ENCODE measurements at regions of chrX and their contacts with region 1.

Region 1: DNA sequence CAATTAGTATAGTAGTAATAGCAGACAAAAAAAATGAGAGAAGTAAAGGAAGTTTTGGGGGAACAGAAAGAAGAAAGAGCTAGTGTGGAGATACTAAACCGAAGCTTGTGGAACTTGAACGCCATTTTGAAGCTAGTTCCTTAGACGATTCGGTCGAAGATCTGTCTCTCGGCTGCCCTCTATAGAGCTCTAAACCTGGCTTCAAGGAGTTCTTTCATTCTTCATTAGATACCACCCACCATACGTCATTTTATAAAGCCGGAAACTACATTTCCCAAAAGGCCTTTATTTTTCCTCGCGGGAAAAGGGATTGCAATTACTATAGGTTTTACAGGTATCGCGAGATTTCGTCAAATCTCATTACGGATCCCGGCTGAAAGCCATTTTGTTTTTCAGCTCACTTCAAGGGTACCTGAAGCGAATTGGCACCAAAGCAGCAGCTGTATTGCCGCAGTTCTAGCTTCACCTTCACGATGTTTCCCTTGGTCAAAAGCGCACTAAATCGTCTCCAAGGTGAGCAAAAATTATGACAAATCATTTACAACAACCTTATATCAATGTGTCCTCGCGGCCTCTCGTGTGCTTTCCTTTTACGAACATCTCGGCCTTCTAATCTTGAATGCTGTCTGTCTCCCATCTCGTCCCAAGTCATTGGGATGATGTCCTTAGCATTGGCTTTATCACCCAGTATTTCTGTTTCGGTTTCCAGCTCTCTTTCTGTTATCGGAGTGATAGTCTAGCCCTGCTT is at the start of gene COX7B:
- DNase-seq: peak; percentile 94
- H3K4me3 ChIP-seq: peak within 1 kb of the TSS; percentile 48 to 88 (median 62)
- H3K27ac ChIP-seq: peak within 1 kb of the TSS; percentile 75
- H3K4me1 ChIP-seq: peaks cover 6% of the 10 kb centered on the region
- H3K27me3 ChIP-seq: no peaks in the 10 kb centered on the region
- CTCF ChIP-seq: peak; percentile 34 to 46
- POLR2A ChIP-seq: peak; percentile 75
- total RNA-seq, gene COX7B: 229 and 230 TPM in 2 replicates

Region 2: GRCh38 chrX:76555814-76556213 is 1343.4 kb before region 1 on chrX:
- CTCF ChIA-PET with region 1: interaction called, 5 read pairs
- POLR2A ChIA-PET with region 1: no interaction called
- dilution Hi-C with region 1: no loop called
- intact Hi-C with region 1: loop called (anchors 10 kb)
- DNase-seq: peak; percentile 19
- H3K4me3 ChIP-seq: no peak overlapping the region
- H3K27ac ChIP-seq: no peak overlapping the region
- H3K4me1 ChIP-seq: no peaks in the 10 kb centered on the region
- H3K27me3 ChIP-seq: no peaks in the 10 kb centered on the region
- CTCF ChIP-seq: peak; percentile 8 to 25
- POLR2A ChIP-seq: no peak

Region 3: GRCh38 chrX:77652095-77652494 is 247.2 kb before region 1 on chrX:
- CTCF ChIA-PET with region 1: no interaction called
- POLR2A ChIA-PET with region 1: no interaction called
- dilution Hi-C with region 1: no loop called
- intact Hi-C with region 1: no loop called
- DNase-seq: no peak
- H3K4me3 ChIP-seq: no peak overlapping the region
- H3K27ac ChIP-seq: no peak overlapping the region
- H3K4me1 ChIP-seq: peaks cover 7% of the 10 kb centered on the region
- H3K27me3 ChIP-seq: no peaks in the 10 kb centered on the region
- CTCF ChIP-seq: no peak
- POLR2A ChIP-seq: no peak

Region 4: DNA sequence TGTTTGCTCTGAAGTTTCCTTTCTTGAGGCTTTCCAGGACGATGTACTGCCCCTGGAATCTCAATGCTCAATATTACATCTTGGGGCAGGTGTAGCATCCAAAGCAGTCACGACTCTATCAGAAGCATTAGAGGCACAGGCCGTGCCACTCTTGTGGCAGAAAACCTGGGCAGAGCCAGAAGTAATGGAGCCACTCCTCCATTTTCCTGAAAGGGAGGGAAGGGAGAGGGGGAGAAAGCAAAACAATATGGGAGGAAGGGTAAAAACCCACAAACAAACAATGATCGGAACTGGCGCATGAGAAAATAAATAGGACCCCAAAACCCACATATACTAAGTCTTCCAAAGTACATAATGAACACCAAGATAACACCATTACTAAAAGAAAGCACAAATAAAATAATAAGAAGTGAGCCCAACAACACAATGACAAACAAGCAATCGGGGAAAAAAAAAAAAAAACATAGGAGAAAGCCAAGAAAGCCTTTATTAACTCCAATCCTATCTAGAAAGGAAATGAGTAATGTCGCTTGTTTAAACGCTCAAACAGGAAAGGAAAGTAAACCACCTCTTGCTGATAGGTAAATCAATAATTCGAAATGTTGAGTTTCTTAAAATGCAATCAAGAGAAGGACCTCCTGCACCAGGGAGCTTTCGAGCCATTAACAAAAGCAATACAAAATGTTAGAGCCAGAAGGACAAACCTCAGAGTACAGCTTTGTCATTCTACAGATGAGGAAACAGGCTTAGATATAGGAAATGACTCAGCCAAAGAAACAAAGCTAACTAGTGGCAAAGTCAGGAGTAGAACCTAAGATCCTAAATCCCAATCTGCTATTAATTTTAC is 230.6 kb before region 1 on chrX:
- CTCF ChIA-PET with region 1: interaction called, 4 read pairs
- POLR2A ChIA-PET with region 1: no interaction called
- dilution Hi-C with region 1: no loop called
- intact Hi-C with region 1: loop called (anchors 5 kb)
- DNase-seq: peak; percentile 81
- H3K4me3 ChIP-seq: peak overlapping the region in 1 of 3 experiments; percentile 44
- H3K27ac ChIP-seq: peak overlapping the region; percentile 73
- H3K4me1 ChIP-seq: peaks cover 18% of the 10 kb centered on the region
- H3K27me3 ChIP-seq: no peaks in the 10 kb centered on the region
- CTCF ChIP-seq: no peak
- POLR2A ChIP-seq: no peak

Region 5: GRCh38 chrX:77875372-77875771 is 23.9 kb before region 1 on chrX:
- CTCF ChIA-PET with region 1: no interaction called
- POLR2A ChIA-PET with region 1: no interaction called
- dilution Hi-C with region 1: no loop called
- intact Hi-C with region 1: no loop called
- DNase-seq: no peak
- H3K4me3 ChIP-seq: no peak overlapping the region
- H3K27ac ChIP-seq: no peak overlapping the region
- H3K4me1 ChIP-seq: no peaks in the 10 kb centered on the region
- H3K27me3 ChIP-seq: no peaks in the 10 kb centered on the region
- CTCF ChIP-seq: no peak
- POLR2A ChIP-seq: no peak

Region 6: GRCh38 chrX:77945910-77946545 is 46.8 kb after region 1 on chrX:
- CTCF ChIA-PET with region 1: no interaction called
- POLR2A ChIA-PET with region 1: no interaction called
- dilution Hi-C with region 1: no loop called
- intact Hi-C with region 1: no loop called
- DNase-seq: no peak
- H3K4me3 ChIP-seq: no peak overlapping the region
- H3K27ac ChIP-seq: no peak overlapping the region
- H3K4me1 ChIP-seq: peaks cover 2% of the 10 kb centered on the region
- H3K27me3 ChIP-seq: no peaks in the 10 kb centered on the region
- CTCF ChIP-seq: no peak
- POLR2A ChIP-seq: no peak

Region 7: DNA sequence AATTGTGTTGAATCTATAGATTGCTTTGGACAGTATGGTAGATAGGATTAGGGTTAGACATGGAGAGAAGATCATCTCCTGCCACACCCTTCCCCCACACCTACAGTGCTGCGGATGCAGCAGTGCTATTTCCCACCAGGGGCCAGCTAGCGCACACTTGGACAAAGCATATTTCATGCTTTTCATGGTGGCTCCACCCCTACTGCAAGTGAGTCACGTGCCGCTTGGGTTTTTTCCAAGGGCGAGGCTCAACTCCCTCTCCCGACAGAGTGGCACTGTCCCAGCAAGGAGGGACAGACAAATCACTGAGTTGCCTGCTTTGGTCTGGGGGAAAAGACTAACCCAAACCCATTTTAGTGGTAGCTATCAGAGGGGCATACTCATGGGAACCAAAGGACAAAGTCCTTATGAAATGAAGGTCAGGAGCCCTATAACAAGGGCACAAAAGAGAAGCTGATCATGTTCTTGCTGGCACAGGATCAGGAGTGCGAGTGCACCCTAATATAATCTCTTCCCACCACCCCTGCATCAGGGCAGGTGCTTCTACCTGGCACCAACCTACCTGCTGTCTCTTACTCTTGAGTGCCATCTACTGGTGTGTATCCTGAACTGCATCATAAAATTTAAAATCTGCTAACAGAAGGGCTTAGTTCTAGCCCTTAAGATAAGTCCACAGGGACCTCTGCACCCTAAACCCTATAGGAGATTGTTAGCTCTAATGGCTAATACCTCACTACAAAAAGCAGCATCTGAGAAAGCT is 125.3 kb after region 1 on chrX:
- CTCF ChIA-PET with region 1: interaction called, 12 read pairs
- POLR2A ChIA-PET with region 1: no interaction called
- dilution Hi-C with region 1: no loop called
- intact Hi-C with region 1: loop called (anchors 5 kb)
- DNase-seq: peak; percentile 16
- H3K4me3 ChIP-seq: no peak overlapping the region
- H3K27ac ChIP-seq: no peak overlapping the region
- H3K4me1 ChIP-seq: no peaks in the 10 kb centered on the region
- H3K27me3 ChIP-seq: no peaks in the 10 kb centered on the region
- CTCF ChIP-seq: peak; percentile 30 to 38
- POLR2A ChIP-seq: no peak

Region 8: GRCh38 chrX:78103623-78104446 is 204.6 kb after region 1 on chrX and contains the start of gene PGK1:
- CTCF ChIA-PET with region 1: no interaction called
- POLR2A ChIA-PET with region 1: no interaction called
- dilution Hi-C with region 1: no loop called
- intact Hi-C with region 1: loop called (anchors 1 kb)
- DNase-seq: peak; percentile 97
- H3K4me3 ChIP-seq: peak within 1 kb of the TSS; percentile 33 to 96 (median 71)
- H3K27ac ChIP-seq: peak within 1 kb of the TSS; percentile 94
- H3K4me1 ChIP-seq: peaks cover 33% of the 10 kb centered on the region
- H3K27me3 ChIP-seq: peaks cover 2 to 3% of the 10 kb centered on the region in 2 experiments
- CTCF ChIP-seq: no peak
- POLR2A ChIP-seq: peak; percentile 69
- total RNA-seq, gene PGK1: 377 and 392 TPM in 2 replicates

Measured in endothelial cell of umbilical vein (primary cell).